Mammary epithelial cell (primary cell): ENCODE measurements at regions of chr14 and their contacts with region 1.

Region 1: GRCh38 chr14:37594238-37594914 is 673 bp downstream of the FOXA1 start:
- DNase-seq: peak; percentile 74
- H3K4me3 ChIP-seq: peak overlapping the region; percentile 54 to 84 (median 57)
- H3K27ac ChIP-seq: peak overlapping the region; percentile 49
- H3K4me1 ChIP-seq: peaks cover 27% of the 10 kb centered on the region
- H3K27me3 ChIP-seq: peaks cover 38% of the 10 kb centered on the region
- CTCF ChIP-seq: peak; percentile 85 to 95

Region 2: DNA sequence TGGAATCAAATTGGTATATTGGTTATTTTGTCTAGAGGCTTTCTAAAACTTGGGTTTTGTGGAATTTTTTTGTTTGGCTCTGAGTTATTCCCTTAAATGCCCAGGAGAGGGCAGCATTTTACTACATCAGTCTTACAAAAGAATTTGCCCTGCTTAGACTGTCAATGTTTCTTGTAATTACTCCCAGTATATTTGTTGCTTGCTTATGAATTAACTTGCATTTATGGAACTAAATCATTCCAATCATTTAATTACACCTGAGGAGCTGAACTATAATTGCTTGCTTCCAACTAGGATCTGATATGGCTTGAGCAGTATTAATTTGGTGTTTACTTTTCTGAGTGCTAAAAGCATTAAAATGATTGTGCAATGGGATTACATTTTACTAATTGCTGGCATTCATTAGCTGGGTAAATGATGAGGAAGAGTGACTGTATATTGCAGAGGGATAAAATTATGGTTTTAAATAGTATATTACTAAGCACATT is 347.9 kb before region 1 on chr14:
- CTCF ChIA-PET with region 1: no interaction called
- dilution Hi-C with region 1: no loop called
- in situ Hi-C with region 1: loop called in 1 of 2 experiments (anchors 10 kb)
- intact Hi-C with region 1: loop called (anchors 1 kb)
- DNase-seq: peak; percentile 21
- H3K4me3 ChIP-seq: no peak overlapping the region
- H3K27ac ChIP-seq: no peak overlapping the region
- H3K4me1 ChIP-seq: no peaks in the 10 kb centered on the region
- H3K27me3 ChIP-seq: no peaks in the 10 kb centered on the region
- CTCF ChIP-seq: peak; percentile 62 to 65

Region 3: DNA sequence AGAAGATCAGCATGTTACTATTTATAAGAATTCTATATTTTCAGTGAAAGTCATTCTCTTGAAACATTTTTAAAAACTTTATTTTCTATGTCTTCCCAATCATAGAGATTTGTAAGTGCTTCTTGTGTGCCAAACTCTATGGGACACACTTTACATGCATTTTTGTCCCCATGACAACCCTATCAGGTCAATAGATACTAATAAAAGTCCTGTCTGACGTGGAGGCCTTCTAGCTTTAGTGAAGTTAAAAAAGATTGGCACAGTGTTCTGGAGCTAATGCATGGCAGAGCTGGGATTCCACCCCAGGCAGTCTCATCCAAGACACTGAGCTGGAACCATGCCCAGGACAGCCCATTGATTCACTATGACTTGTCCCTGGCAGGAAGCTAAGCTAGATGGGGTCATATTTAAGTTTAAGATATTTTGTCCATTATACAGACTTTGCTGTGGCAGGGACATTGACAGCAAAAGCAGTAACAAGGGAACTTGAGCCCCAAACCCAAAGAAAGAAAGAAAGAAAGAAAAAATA is 29.1 kb after region 1 on chr14:
- CTCF ChIA-PET with region 1: no interaction called
- dilution Hi-C with region 1: no loop called
- in situ Hi-C with region 1: no loop called
- intact Hi-C with region 1: loop called (anchors 2 kb)
- DNase-seq: peak; percentile 97
- H3K4me3 ChIP-seq: no peak overlapping the region
- H3K27ac ChIP-seq: peak overlapping the region; percentile 90
- H3K4me1 ChIP-seq: peaks cover 13% of the 10 kb centered on the region
- H3K27me3 ChIP-seq: no peaks in the 10 kb centered on the region
- CTCF ChIP-seq: no peak

Region 4: DNA sequence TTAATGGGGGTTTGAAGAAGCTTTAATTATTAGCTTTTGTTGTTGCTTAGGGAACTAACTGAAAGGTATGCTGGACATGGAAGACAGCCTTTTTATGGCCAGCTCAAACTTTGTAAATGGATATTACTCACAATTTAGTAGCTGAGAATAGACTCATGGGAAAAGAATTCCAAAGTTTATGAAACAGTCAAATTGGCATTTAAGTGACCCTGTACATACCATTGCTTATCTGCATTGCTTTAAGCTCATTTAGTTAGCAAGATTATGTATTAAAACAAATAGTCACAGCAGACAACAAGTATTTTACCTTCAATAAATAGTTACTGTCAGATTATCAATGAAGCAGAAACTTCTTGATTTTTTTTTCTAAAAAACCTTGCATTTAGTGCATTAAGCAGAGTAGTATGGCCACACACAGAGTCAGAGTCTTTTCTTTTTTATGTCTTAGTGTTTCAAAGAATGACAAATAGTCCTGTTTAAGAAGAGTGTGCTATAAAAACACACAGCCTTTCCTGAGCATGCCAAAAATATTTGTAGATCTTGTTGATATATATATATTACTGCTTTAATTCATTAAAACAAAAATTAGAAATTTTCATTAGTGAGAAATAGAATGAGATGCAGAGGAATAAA is 103.2 kb after region 1 on chr14:
- CTCF ChIA-PET with region 1: no interaction called
- dilution Hi-C with region 1: no loop called
- in situ Hi-C with region 1: no loop called
- intact Hi-C with region 1: loop called (anchors 5 kb)
- DNase-seq: peak; percentile 50
- H3K4me3 ChIP-seq: no peak overlapping the region
- H3K27ac ChIP-seq: no peak overlapping the region
- H3K4me1 ChIP-seq: no peaks in the 10 kb centered on the region
- H3K27me3 ChIP-seq: no peaks in the 10 kb centered on the region
- CTCF ChIP-seq: no peak